RWPE1 (cell line): ENCODE measurements at regions of chr16 and their contacts with region 1.

Region 1: DNA sequence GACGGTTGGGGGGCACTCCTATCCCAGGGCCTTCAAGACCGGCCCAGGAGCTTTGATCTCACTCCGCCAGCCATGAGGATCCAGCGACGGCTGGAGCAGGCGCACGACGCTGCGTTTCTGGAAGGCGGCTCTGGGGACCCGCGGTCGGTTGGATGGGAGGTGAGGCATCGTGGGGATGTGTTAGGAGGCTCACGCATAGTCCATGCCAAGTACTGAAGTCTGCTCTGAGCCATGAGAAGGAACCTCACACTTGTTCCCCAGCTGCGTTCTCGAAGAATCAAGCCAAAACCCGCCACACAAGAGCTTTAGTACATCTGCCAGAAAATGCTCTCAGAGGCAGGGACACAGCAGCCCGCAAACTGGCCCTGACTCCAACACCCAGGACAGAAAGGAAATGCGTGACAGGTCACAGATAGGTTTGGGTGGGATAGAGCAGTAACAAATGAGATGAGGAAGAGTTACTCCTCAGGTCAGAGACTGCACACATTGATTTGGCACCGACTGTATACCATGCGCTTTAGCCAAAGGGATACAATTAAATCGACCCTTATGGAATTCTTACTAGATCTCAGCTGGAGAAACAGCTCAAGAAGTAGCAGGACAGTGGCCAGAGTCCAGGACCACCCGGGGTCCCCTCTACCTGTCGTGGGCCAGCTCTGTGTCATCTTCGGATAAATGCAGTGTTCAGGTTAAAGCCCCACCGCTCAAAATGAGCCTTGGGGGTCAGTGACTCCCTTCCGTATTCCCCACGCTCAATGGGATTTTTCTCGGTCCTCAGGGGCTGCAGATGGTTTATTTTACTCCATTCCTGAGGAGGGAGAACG is 6.7 kb upstream of the GSG1L start:
- DNase-seq: no peak
- H3K27ac ChIP-seq: no peak overlapping the region
- CTCF ChIP-seq: no peak

Region 2: GRCh38 chr16:28090646-28091377 is 20.6 kb after region 1 on chr16:
- CTCF ChIA-PET with region 1: interaction called, 10 read pairs
- POLR2A ChIA-PET with region 1: no interaction called
- DNase-seq: peak; percentile 53
- H3K27ac ChIP-seq: peak overlapping the region; percentile 27; the same call in 1 of the 2 replicates
- CTCF ChIP-seq: no peak